Activated naive CD4-positive, alpha-beta T cell treated with anti-CD3 and anti-CD28 coated beads for 36 hours (primary cell): ENCODE measurements at regions of chr21 and their contacts with region 1.

Region 1: DNA sequence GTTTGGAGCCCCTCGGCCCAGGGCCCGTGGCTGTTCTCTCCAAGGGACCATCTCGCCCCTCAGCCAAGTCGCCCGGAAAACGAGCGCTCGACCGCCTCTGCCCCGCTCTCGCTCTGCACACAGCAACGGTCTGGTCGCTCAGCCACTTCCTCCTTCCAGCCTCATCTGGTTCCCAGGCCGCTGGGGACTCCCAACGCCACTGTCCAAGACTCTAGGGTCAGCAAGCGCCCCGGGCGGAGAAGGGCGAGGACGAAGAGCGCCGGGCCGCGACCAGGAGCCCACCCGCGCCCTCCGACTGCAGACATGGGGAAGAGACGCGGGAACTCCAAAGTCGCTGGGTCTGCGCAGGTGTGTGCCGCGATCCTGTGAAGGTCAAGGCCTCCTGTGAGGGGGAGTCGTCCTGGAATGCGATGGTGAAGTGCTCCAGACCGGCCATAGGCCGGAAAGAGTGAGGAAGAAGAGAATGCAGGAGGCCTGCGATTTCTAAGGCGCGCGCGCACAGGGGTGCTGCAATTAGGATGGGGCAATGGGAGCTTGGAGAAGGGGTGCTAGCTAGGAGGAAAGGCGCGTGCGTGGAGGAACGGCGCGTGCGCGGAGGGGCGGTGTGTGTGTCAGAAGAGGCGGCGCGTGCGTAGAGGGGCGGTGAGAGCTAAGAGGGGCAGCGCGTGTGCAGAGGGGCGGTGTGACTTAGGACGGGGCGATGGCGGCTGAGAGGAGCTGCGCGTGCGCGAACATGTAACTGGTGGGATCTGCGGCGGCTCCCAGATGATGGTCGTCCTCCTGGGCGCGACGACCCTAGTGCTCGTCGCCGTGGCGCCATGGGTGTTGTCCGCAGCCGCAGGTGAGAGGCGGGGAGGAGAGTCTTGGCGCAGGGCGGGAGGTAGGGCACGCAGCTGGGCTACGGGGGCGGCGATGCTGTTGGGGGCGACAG is at the start of gene IFNAR1:
- DNase-seq: peak; percentile 99
- H3K4me3 Mint-ChIP-seq: no peak within 1 kb of the TSS
- H3K27ac Mint-ChIP-seq: no peak within 1 kb of the TSS
- H3K4me1 Mint-ChIP-seq: peaks cover 28% of the 10 kb centered on the region
- H3K27me3 Mint-ChIP-seq: no peaks in the 10 kb centered on the region
- total RNA-seq, gene IFNAR1: 20.6 to 24.3 TPM

Region 2: DNA sequence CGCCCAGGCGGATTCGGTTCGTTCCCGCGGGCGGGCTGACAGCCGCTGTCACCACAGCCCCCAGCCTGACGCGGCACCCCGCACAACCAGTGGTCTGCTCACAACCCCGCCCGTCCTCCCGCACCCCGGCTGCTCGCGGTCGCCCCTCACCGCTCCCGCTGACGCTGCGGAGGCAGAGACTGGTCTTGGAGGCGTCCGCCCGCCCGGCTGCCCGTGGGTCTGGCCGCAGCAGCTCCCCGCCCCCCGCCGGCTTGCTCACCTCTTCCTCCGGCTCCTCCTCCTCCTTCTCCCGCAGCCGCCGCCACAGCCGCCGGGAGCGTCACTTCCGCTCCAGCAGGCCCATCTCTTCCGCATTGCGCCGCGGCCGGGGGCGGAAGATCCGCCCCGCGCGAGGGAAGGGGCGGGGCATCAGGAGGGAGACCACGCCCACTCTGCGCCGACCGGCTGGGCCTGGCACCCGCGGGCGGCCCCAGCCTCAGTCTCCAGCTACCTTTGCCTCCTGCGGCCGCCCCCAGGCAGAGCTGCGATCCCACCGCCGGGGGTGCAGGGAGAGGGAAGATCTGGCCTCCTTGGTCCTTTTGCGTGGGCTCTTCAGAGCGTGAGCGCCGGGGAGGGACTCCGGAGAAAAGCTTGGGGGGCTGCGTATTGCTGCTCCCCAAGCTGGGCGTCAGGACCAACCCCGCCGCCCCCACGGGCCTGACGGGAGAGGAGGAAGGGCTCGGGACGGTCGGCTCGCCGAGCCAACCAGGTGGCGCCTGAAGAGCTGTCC is 596.7 kb before region 1 on chr21 and contains the start of gene SYNJ1:
- CTCF ChIA-PET with region 1: no interaction called
- intact Hi-C with region 1: loop called (anchors 2 kb)
- DNase-seq: peak; percentile 94
- H3K4me3 Mint-ChIP-seq: peak within 1 kb of the TSS; percentile 96
- H3K27ac Mint-ChIP-seq: peak within 1 kb of the TSS; percentile 88
- H3K4me1 Mint-ChIP-seq: peaks cover 45% of the 10 kb centered on the region
- H3K27me3 Mint-ChIP-seq: no peaks in the 10 kb centered on the region
- total RNA-seq, gene SYNJ1: 7.4 to 10.9 TPM

Region 3: GRCh38 chr21:33259995-33260394 is 64.6 kb before region 1 on chr21:
- CTCF ChIA-PET with region 1: no interaction called
- intact Hi-C with region 1: loop called (anchors 2 kb)
- DNase-seq: no peak
- H3K4me3 Mint-ChIP-seq: no peak overlapping the region
- H3K27ac Mint-ChIP-seq: no peak overlapping the region
- H3K4me1 Mint-ChIP-seq: peaks cover 57% of the 10 kb centered on the region
- H3K27me3 Mint-ChIP-seq: no peaks in the 10 kb centered on the region

Region 4: DNA sequence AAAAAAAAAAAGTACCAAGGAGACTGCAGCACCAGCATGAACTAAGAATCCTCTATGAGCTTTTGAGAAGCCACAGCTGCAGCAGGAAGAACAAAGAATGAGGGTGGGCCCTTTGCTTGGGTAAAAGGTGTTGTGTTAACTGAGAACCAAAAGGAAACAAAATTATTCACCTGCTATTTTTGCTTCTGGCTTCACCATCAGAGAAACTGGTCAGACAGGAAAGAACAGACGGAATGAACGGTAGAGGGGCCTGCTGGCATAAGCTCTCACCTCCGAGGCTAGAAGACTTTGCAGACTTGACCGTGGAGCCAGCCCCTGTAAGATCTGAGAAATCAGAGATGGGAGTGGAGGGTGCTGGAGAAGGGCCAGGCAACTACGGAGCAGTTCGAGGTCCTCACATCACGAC is 30.7 kb before region 1 on chr21:
- CTCF ChIA-PET with region 1: interaction called, 3 read pairs
- intact Hi-C with region 1: loop called (anchors 1 kb)
- DNase-seq: peak; percentile 39
- H3K4me3 Mint-ChIP-seq: no peak overlapping the region
- H3K27ac Mint-ChIP-seq: peak overlapping the region; percentile 61
- H3K4me1 Mint-ChIP-seq: peaks cover 40% of the 10 kb centered on the region
- H3K27me3 Mint-ChIP-seq: no peaks in the 10 kb centered on the region

Region 5: DNA sequence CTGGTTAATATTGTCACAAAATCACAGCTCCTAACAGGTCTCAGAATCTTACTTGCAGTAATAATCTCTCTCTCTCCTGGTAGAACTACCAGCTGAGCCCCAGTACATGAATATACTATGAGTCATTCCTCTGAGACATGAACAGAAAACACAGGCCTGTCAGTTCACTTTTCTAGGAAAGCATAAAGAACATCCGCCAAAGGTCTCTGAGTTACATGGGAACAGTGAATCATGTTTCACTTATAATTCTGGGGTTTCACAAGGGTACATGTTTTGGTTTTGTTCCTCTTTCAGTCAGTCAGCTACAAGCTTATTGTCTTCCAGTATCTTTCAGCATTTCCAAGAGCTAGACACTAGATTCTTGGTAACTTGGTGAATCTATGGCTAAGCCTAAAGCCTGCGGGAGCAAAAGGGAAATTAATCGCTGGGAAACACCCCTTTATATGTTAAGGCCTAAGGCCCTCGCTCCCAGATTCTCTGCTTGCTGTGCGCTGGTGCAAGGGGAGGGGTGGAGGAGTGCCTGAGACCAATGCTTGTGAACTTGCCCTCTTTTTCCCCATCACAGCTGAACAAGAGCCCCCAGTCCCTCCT is 110.3 kb after region 1 on chr21:
- CTCF ChIA-PET with region 1: no interaction called
- intact Hi-C with region 1: loop called (anchors 1 kb)
- DNase-seq: peak; percentile 43
- H3K4me3 Mint-ChIP-seq: peak overlapping the region; percentile 25
- H3K27ac Mint-ChIP-seq: peak overlapping the region; percentile 76
- H3K4me1 Mint-ChIP-seq: peaks cover 29% of the 10 kb centered on the region
- H3K27me3 Mint-ChIP-seq: no peaks in the 10 kb centered on the region

Region 6: GRCh38 chr21:33780631-33781030 is 456.1 kb after region 1 on chr21:
- CTCF ChIA-PET with region 1: no interaction called
- intact Hi-C with region 1: no loop called
- DNase-seq: no peak
- H3K4me3 Mint-ChIP-seq: no peak overlapping the region
- H3K27ac Mint-ChIP-seq: no peak overlapping the region
- H3K4me1 Mint-ChIP-seq: no peaks in the 10 kb centered on the region
- H3K27me3 Mint-ChIP-seq: no peaks in the 10 kb centered on the region